ENCODE measurements at regions of chr22 and their contacts with region 1.

Region 1: DNA sequence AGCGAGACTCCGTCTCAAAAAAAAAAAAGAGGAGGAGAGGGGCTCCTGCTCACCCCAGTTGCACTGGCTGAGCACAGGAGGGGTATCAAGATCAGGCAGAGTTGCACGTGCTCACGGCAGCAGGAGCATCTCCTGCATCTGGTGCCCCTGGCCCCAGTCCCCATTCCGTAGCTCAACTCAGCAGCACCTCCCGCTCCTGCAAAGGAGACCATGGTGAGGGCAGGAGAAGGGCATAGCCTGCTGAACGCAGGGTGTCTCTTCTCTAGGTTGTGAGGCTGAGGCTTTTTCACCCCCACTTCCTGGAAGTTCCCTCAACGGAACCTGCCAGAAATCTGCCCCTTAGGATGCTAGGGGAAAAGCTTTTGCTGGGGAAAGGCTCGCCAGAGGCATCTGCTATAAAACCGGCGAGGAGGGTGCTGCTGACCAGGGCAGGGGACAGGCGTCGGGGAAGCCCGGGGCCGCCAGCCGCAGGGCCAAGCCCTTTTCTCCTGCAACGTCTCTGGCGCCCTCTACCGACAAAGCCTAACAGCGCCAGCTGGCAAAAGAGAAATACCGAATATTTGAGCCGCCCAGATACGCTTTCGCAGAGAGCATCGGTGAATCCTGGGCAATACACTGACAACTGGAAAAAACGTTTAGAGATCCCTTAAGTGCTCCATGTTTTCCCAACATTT is 1.0 kb upstream of the PPP6R2 start:
- DNase-seq: peak; percentile 70
- ATAC-seq: peak; percentile 78
- H3K4me3 ChIP-seq: peak overlapping the region; percentile 57 to 73
- H3K27ac ChIP-seq: peak overlapping the region; percentile 87
- H3K4me1 ChIP-seq: peaks cover 4 to 12% of the 10 kb centered on the region in 2 experiments
- H3K27me3 ChIP-seq: no peaks in the 10 kb centered on the region
- CTCF ChIP-seq: peak; percentile 94 to 97 (median 95)
- POLR2A ChIP-seq: no peak
- RAD21 ChIP-seq: peak; percentile 96

Region 2: DNA sequence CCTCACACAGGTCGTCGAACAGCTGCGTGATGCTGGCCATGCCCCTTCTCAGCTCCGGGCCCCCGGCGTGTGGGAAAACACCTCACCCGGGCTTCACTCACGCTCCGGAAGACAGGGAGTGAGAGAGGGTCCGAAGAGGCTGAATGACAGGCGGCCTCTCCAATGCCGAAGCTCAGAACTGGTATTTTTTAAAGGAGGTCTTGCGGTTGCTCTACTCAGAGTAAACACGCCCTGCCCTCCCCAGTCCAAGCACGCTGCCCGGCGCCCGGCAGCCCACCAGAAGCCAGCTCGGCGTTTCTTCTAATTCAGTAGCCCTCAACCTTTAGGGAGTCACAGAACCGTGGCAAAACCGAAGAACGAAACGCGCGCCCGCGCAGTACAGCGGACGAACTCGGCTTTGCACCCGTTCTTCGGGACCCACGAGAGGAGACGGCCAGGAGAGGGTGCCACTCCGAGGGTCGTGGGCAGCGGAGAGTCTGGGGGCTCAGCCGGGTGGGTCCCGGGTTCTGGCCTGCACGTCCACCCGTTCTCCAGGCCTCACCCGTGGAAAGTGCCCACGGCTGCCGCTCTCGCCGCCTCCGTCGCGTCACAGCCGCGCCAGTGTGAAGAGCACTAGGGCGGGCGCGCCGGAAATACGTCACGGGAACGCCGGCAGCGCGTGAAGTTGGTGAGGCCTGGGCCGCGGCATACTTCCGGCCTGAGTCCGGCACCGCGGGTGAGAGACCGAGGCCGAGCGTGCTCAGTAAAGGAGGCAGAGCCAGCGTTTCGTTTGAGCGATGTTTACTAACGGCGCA is 97.5 kb before region 1 on chr22 and contains the start of gene TUBGCP6:
- CTCF ChIA-PET with region 1: no interaction called
- POLR2A ChIA-PET with region 1: no interaction called
- RAD21 ChIA-PET with region 1: no interaction called
- intact Hi-C with region 1: loop called (anchors 1 kb)
- DNase-seq: peak; percentile 83
- ATAC-seq: peak; percentile 77
- H3K4me3 ChIP-seq: peak within 1 kb of the TSS; percentile 93 to 95
- H3K27ac ChIP-seq: peak within 1 kb of the TSS; percentile 81
- H3K4me1 ChIP-seq: peaks cover 23 to 60% of the 10 kb centered on the region in 2 experiments
- H3K27me3 ChIP-seq: no peaks in the 10 kb centered on the region
- CTCF ChIP-seq: peak in 2 of 3 experiments; percentile 33 to 35; a peak in 4 of 6 replicates
- POLR2A ChIP-seq: peak; percentile 73
- RAD21 ChIP-seq: no peak
- total RNA-seq, gene TUBGCP6: 38.6 TPM

Region 3: GRCh38 chr22:50250555-50251476 is 91.3 kb before region 1 on chr22 and contains the start of gene HDAC10:
- CTCF ChIA-PET with region 1: interaction called, 17 read pairs
- POLR2A ChIA-PET with region 1: interaction called, 3 read pairs
- RAD21 ChIA-PET with region 1: interaction called in 1 of 2 experiments, 5 read pairs
- intact Hi-C with region 1: loop called (anchors 1 kb)
- DNase-seq: no peak
- ATAC-seq: peak; percentile 76
- H3K4me3 ChIP-seq: peak within 1 kb of the TSS; percentile 70 to 93
- H3K27ac ChIP-seq: peak within 1 kb of the TSS; percentile 99
- H3K4me1 ChIP-seq: peaks cover 17 to 59% of the 10 kb centered on the region in 2 experiments; a peak in 3 of 4 replicates
- H3K27me3 ChIP-seq: no peaks in the 10 kb centered on the region
- CTCF ChIP-seq: no peak
- POLR2A ChIP-seq: no peak
- RAD21 ChIP-seq: no peak
- total RNA-seq, gene HDAC10: 67.5 TPM

Region 4: DNA sequence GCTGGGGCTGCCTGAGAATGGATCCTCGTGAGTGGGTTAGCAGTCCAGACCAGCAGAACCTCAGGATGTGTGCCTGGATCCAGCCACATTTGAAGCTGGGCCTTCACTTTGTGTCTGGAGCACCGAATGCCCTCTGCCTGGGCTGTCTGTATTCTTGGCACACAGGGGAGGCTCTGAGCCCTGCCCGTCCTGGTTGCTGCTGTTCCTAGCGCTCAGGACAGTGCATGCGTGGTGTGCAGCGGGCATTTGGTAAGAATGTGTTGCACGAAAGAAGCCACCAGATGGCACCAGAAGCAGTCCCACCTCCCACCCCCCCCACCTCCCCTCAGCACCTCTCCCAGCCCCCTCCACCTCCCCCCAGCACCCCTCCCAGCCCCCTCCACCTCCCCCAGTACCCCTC is 67.8 kb before region 1 on chr22:
- CTCF ChIA-PET with region 1: interaction called, 3 read pairs
- POLR2A ChIA-PET with region 1: no interaction called
- RAD21 ChIA-PET with region 1: no interaction called
- intact Hi-C with region 1: loop called (anchors 1 kb)
- DNase-seq: no peak
- ATAC-seq: no peak
- H3K4me3 ChIP-seq: no peak overlapping the region
- H3K27ac ChIP-seq: peak overlapping the region; percentile 49
- H3K4me1 ChIP-seq: peaks cover 14 to 43% of the 10 kb centered on the region in 2 experiments
- H3K27me3 ChIP-seq: no peaks in the 10 kb centered on the region
- CTCF ChIP-seq: peak in 2 of 3 experiments; percentile 23; a peak in 2 of 6 replicates
- POLR2A ChIP-seq: no peak
- RAD21 ChIP-seq: 0 out of 2 replicates have a peak, but pooled peaks have one; percentile 18

Region 5: GRCh38 chr22:50320671-50321325 is 21.3 kb before region 1 on chr22:
- CTCF ChIA-PET with region 1: no interaction called
- POLR2A ChIA-PET with region 1: no interaction called
- RAD21 ChIA-PET with region 1: no interaction called
- intact Hi-C with region 1: no loop called
- DNase-seq: no peak
- ATAC-seq: no peak
- H3K4me3 ChIP-seq: no peak overlapping the region
- H3K27ac ChIP-seq: no peak overlapping the region
- H3K4me1 ChIP-seq: peaks cover 21 to 26% of the 10 kb centered on the region in 2 experiments
- H3K27me3 ChIP-seq: no peaks in the 10 kb centered on the region
- CTCF ChIP-seq: no peak
- POLR2A ChIP-seq: no peak
- RAD21 ChIP-seq: no peak

Region 6: DNA sequence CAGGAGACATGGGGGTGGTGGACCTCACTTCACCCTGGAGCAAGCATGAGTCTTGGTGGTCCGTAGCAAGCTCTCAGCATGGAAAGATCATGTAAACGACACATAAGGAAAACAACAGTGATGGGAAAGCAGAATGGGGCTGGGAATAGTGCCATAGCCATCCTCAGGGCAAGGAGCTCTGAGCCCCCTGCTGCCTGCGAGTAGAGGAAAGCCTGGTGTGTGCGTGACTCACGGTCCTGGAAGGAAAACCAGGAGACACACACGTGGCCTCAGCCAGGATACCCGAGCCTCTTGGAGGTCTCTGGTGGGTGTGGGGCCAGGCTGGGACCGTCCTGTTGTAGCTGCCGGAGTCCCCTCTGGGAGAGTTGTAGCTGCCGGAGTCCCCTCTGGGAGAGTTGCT is 342.9 kb after region 1 on chr22:
- CTCF ChIA-PET with region 1: no interaction called
- POLR2A ChIA-PET with region 1: no interaction called
- RAD21 ChIA-PET with region 1: no interaction called
- intact Hi-C with region 1: no loop called
- DNase-seq: no peak
- ATAC-seq: no peak
- H3K4me3 ChIP-seq: no peak overlapping the region
- H3K27ac ChIP-seq: no peak overlapping the region
- H3K4me1 ChIP-seq: no peaks in the 10 kb centered on the region
- H3K27me3 ChIP-seq: no peaks in the 10 kb centered on the region
- CTCF ChIP-seq: no peak
- POLR2A ChIP-seq: no peak
- RAD21 ChIP-seq: no peak